GM12878 (cell line): ENCODE measurements at regions of chr7 and their contacts with region 1.

Region 1: GRCh38 chr7:105759670-105760550 is 116.5 kb downstream of the ATXN7L1 start:
- DNase-seq: no peak
- ATAC-seq: peak; percentile 60
- H3K4me3 ChIP-seq: no peak overlapping the region
- H3K27ac ChIP-seq: no peak overlapping the region
- H3K4me1 ChIP-seq: no peaks in the 10 kb centered on the region
- H3K27me3 ChIP-seq: peaks cover 0 to 3% of the 10 kb centered on the region in 2 experiments; a peak in 2 of 4 replicates
- CTCF ChIP-seq: peak; percentile 33 to 79 (median 42); a peak in 5 of 6 replicates
- EP300 ChIP-seq: no peak
- POLR2A ChIP-seq: no peak
- RAD21 ChIP-seq: peak; percentile 75

Region 2: GRCh38 chr7:105024743-105025142 is 735.2 kb before region 1 on chr7:
- CTCF ChIA-PET with region 1: no interaction called
- POLR2A ChIA-PET with region 1: no interaction called
- RAD21 ChIA-PET with region 1: no interaction called
- SMC1A ChIA-PET with region 1: no interaction called
- in situ Hi-C with region 1: no loop called
- intact Hi-C with region 1: no loop called
- DNase-seq: no peak
- ATAC-seq: peak; percentile 1; the same call in 1 of the 3 replicates
- H3K4me3 ChIP-seq: 0 out of 2 replicates have a peak overlapping the region, but pooled peaks have one; percentile 28
- H3K27ac ChIP-seq: no peak overlapping the region
- H3K4me1 ChIP-seq: peaks cover 28% of the 10 kb centered on the region
- H3K27me3 ChIP-seq: no peaks in the 10 kb centered on the region
- CTCF ChIP-seq: no peak
- EP300 ChIP-seq: no peak
- POLR2A ChIP-seq: no peak
- RAD21 ChIP-seq: no peak

Region 3: GRCh38 chr7:105268511-105269392 is 491.2 kb before region 1 on chr7:
- CTCF ChIA-PET with region 1: no interaction called
- POLR2A ChIA-PET with region 1: no interaction called
- RAD21 ChIA-PET with region 1: no interaction called
- SMC1A ChIA-PET with region 1: no interaction called
- in situ Hi-C with region 1: no loop called
- intact Hi-C with region 1: no loop called
- DNase-seq: no peak
- ATAC-seq: peak; percentile 80
- H3K4me3 ChIP-seq: peak overlapping the region; percentile 66
- H3K27ac ChIP-seq: peak overlapping the region; percentile 79
- H3K4me1 ChIP-seq: peaks cover 6% of the 10 kb centered on the region; the same call in 1 of the 2 replicates
- H3K27me3 ChIP-seq: no peaks in the 10 kb centered on the region
- CTCF ChIP-seq: no peak
- EP300 ChIP-seq: no peak; a peak in 1 of 4 replicates
- POLR2A ChIP-seq: no peak
- RAD21 ChIP-seq: no peak

Region 4: GRCh38 chr7:105748701-105749100 is 11.2 kb before region 1 on chr7:
- CTCF ChIA-PET with region 1: interaction called, 27 read pairs
- POLR2A ChIA-PET with region 1: no interaction called
- RAD21 ChIA-PET with region 1: no interaction called
- SMC1A ChIA-PET with region 1: interaction called, 7 read pairs
- in situ Hi-C with region 1: no loop called
- intact Hi-C with region 1: no loop called
- DNase-seq: no peak
- ATAC-seq: no peak
- H3K4me3 ChIP-seq: no peak overlapping the region
- H3K27ac ChIP-seq: no peak overlapping the region
- H3K4me1 ChIP-seq: no peaks in the 10 kb centered on the region
- H3K27me3 ChIP-seq: peaks cover 3 to 4% of the 10 kb centered on the region in 2 experiments; a peak in 3 of 4 replicates
- CTCF ChIP-seq: no peak
- EP300 ChIP-seq: no peak
- POLR2A ChIP-seq: no peak
- RAD21 ChIP-seq: no peak

Region 5: DNA sequence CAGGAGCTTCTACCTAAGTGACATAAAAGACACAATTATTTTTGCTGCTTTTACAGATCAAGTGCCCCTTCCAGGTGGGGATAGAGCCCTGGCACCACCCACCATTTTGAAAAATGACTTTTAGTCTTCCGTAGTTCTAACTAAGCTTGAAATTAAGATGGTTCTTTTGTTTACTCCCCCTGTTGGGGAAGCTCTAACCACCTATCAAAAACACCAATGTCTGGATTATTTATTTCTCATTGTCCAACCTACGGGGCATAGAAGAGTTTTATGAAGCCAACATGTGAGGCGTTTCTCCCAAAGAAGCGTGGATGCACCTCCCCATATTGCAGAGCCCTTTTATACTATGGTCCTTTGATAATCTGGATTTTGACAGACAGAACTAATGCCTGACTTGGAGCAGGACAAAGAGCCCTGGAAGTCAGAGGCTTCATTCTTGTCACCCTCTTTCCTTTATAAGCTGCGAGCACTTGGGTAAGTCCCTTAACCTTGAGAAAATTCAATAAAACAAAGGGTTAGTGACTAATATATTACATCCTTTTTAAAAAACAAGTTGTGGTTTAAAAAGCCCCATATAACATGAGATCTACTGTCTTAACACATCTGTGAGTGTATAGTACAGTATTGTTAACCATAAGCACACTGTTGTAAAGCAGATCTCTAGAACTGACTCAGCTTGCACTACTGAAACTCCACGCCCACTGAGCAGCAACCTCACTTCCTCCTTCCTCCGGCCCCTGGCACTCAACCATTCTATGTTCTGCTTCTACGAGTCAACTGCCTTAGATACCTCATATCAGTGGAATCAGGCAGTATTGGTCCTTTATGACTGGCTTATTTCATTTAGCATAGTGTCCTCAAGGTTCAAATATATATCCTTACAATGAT is 49.0 kb after region 1 on chr7:
- CTCF ChIA-PET with region 1: interaction called, 45 read pairs
- POLR2A ChIA-PET with region 1: interaction called, 7 read pairs
- RAD21 ChIA-PET with region 1: interaction called, 99 read pairs
- SMC1A ChIA-PET with region 1: interaction called, 182 read pairs
- in situ Hi-C with region 1: no loop called
- intact Hi-C with region 1: no loop called
- DNase-seq: peak; percentile 99
- ATAC-seq: peak; percentile 92
- H3K4me3 ChIP-seq: no peak overlapping the region
- H3K27ac ChIP-seq: peak overlapping the region; percentile 76
- H3K4me1 ChIP-seq: peaks cover 40% of the 10 kb centered on the region
- H3K27me3 ChIP-seq: no peaks in the 10 kb centered on the region
- CTCF ChIP-seq: no peak
- EP300 ChIP-seq: peak; percentile 99 to 100
- POLR2A ChIP-seq: no peak
- RAD21 ChIP-seq: no peak

Region 6: GRCh38 chr7:106009403-106010226 is 249.7 kb after region 1 on chr7:
- CTCF ChIA-PET with region 1: interaction called, 68 read pairs
- POLR2A ChIA-PET with region 1: no interaction called
- RAD21 ChIA-PET with region 1: interaction called, 19 read pairs
- SMC1A ChIA-PET with region 1: interaction called, 34 read pairs
- in situ Hi-C with region 1: loop called (anchors 10 kb)
- intact Hi-C with region 1: loop called (anchors 2 kb)
- DNase-seq: no peak
- ATAC-seq: peak; percentile 98
- H3K4me3 ChIP-seq: no peak overlapping the region
- H3K27ac ChIP-seq: no peak overlapping the region
- H3K4me1 ChIP-seq: no peaks in the 10 kb centered on the region
- H3K27me3 ChIP-seq: no peaks in the 10 kb centered on the region; a peak in 3 of 4 replicates
- CTCF ChIP-seq: peak; percentile 83 to 94 (median 86)
- EP300 ChIP-seq: no peak
- POLR2A ChIP-seq: no peak
- RAD21 ChIP-seq: peak; percentile 63

Region 7: GRCh38 chr7:106029944-106030343 is 270.0 kb after region 1 on chr7:
- CTCF ChIA-PET with region 1: interaction called, 11 read pairs
- POLR2A ChIA-PET with region 1: no interaction called
- RAD21 ChIA-PET with region 1: interaction called, 3 read pairs
- SMC1A ChIA-PET with region 1: interaction called, 21 read pairs
- in situ Hi-C with region 1: no loop called
- intact Hi-C with region 1: no loop called
- DNase-seq: no peak
- ATAC-seq: peak; percentile 39; the same call in 1 of the 3 replicates
- H3K4me3 ChIP-seq: no peak overlapping the region
- H3K27ac ChIP-seq: no peak overlapping the region
- H3K4me1 ChIP-seq: no peaks in the 10 kb centered on the region
- H3K27me3 ChIP-seq: peaks cover 3 to 4% of the 10 kb centered on the region in 2 experiments
- CTCF ChIP-seq: peak in 2 of 3 experiments; percentile 11 to 28; a peak in 2 of 6 replicates
- EP300 ChIP-seq: no peak
- POLR2A ChIP-seq: no peak
- RAD21 ChIP-seq: no peak

Region 8: DNA sequence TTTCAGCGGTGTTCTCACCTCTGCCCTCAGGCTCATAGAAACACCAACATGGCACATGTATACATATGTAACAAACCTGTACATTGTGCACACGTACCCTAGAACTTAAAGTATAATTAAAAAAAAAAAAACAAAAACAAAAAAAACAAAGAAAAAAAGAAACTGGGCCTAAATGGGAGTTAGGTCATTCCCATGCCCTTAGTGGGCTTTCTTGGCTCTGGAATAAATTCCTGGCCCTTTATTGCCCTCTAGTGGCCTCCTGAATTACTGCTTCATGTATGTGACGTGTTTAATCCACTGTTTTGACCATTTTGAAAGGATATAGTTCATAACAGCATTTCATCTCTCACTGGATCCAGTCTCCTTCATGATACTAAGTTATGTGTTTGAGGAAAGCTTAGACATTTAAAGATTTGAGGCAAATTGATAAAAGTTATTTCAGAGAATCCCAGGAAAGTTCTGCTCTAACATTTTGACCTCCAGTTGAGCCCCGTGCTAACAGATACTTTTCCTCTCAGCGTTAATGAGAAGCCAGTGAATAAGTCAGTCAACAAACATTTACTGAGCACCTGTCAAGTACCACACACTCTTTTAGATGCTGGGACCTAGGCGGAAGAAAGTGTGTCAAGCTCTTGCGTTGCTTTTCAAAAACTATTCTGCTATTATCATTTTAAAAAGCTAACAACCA is 406.9 kb after region 1 on chr7:
- CTCF ChIA-PET with region 1: interaction called, 25 read pairs
- POLR2A ChIA-PET with region 1: no interaction called
- RAD21 ChIA-PET with region 1: interaction called, 4 read pairs
- SMC1A ChIA-PET with region 1: interaction called, 22 read pairs
- in situ Hi-C with region 1: loop called (anchors 5 kb)
- intact Hi-C with region 1: no loop called
- DNase-seq: no peak
- ATAC-seq: peak; percentile 77
- H3K4me3 ChIP-seq: no peak overlapping the region
- H3K27ac ChIP-seq: no peak overlapping the region
- H3K4me1 ChIP-seq: no peaks in the 10 kb centered on the region
- H3K27me3 ChIP-seq: no peaks in the 10 kb centered on the region
- CTCF ChIP-seq: peak; percentile 68 to 77 (median 72); a peak in 5 of 6 replicates
- EP300 ChIP-seq: no peak
- POLR2A ChIP-seq: no peak
- RAD21 ChIP-seq: peak; percentile 85